WTC11 (cell line): ENCODE measurements at regions of chr6 and their contacts with region 1.

Region 1: DNA sequence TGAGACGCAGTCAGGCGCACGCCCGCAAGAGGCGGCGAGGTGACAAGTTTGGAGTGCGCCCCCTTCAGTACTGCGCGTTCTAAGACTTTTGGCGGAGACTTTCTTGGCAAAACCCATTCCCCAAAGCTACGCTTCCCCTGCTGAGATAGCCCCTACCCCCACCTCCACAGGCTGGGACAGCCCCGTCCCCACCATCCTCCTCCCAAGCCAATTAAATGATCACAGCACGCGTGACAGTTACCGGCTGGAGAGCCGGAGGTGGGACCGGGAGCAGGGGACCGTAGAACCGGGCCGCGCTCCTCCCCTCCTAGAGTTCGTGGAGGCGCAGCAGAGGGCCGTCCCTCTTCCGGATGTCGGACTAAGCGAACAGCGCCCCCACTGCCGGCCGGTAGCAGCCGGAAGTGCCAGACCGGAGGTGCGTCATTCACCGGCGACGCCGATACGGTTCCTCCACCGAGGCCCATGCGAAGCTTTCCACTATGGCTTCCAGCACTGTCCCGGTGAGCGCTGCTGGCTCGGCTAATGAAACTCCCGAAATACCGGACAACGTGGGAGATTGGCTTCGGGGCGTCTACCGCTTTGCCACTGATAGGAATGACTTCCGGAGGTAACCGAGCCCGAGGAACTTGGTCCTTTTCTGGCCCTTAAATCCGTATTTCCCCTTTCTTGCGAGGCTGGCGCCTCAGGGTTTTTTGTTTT is at the start of gene TOMM6:
- DNase-seq: peak; percentile 96
- ATAC-seq: peak; percentile 74
- H3K4me3 Mint-ChIP-seq: peak within 1 kb of the TSS; percentile 96
- H3K27ac Mint-ChIP-seq: peak within 1 kb of the TSS; percentile 97
- H3K4me1 Mint-ChIP-seq: peaks cover 22% of the 10 kb centered on the region
- H3K27me3 Mint-ChIP-seq: peaks cover 38% of the 10 kb centered on the region
- CTCF ChIP-seq: peak; percentile 96
- total RNA-seq, gene TOMM6: 219 to 233 TPM (median 228 TPM) in 3 replicates

Region 2: GRCh38 chr6:41239467-41240159 is 547.8 kb before region 1 on chr6:
- CTCF ChIA-PET with region 1: no interaction called
- POLR2A ChIA-PET with region 1: no interaction called
- DNase-seq: peak; percentile 61
- ATAC-seq: peak; percentile 93
- H3K4me3 Mint-ChIP-seq: peak overlapping the region; percentile 79
- H3K27ac Mint-ChIP-seq: no peak overlapping the region
- H3K4me1 Mint-ChIP-seq: peaks cover 14% of the 10 kb centered on the region
- H3K27me3 Mint-ChIP-seq: peaks cover 52% of the 10 kb centered on the region
- CTCF ChIP-seq: no peak

Region 3: GRCh38 chr6:41367700-41368099 is 419.7 kb before region 1 on chr6:
- CTCF ChIA-PET with region 1: interaction called, 17 read pairs
- POLR2A ChIA-PET with region 1: no interaction called
- DNase-seq: peak; percentile 84
- ATAC-seq: peak; percentile 77
- H3K4me3 Mint-ChIP-seq: no peak overlapping the region
- H3K27ac Mint-ChIP-seq: no peak overlapping the region
- H3K4me1 Mint-ChIP-seq: peaks cover 30% of the 10 kb centered on the region
- H3K27me3 Mint-ChIP-seq: peaks cover 75% of the 10 kb centered on the region
- CTCF ChIP-seq: peak; percentile 58

Region 4: DNA sequence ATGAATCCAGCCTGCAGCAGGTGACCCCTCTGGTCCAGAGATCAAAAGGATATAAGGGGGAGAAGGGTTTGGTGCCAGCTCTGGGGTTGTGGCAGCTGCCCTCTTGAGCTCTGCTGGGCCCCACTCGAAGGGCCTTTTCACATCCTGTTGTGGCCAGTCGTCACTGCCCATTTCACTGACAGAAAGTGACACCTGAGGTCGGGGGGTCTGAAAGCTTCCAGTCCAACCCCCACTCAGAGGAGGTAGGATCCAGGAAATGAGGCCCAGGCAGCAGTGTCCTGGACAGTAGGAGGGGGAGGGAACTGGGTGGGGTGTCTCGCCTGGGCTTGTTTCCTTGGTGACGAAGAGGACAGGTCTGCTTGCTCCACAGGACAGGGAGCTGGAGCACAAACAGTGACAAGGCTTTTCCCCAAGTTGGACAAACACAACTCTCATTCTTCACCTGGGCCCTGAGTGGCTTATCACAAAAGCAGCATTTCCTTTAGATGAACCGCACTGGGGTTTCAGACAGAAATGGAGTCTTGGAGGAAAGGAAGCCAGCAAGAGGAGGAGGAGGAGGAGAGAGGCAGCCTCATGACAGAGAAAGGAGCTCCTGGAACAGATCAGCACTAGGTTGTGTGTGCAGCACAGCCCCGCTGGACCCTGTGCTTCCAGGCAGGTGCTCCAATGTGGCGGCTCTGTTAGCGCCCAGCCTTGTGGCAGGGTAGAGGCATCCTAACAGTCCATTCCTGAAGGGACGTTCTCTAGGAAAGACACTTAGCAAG is 18.6 kb before region 1 on chr6:
- CTCF ChIA-PET with region 1: interaction called, 14 read pairs
- POLR2A ChIA-PET with region 1: no interaction called
- DNase-seq: no peak
- ATAC-seq: no peak
- H3K4me3 Mint-ChIP-seq: no peak overlapping the region
- H3K27ac Mint-ChIP-seq: peak overlapping the region; percentile 71; the same call in 1 of the 2 replicates
- H3K4me1 Mint-ChIP-seq: peaks cover 12% of the 10 kb centered on the region
- H3K27me3 Mint-ChIP-seq: no peaks in the 10 kb centered on the region
- CTCF ChIP-seq: no peak

Region 5: GRCh38 chr6:41895300-41896233 is 108.2 kb after region 1 on chr6 and contains the start of gene USP49:
- CTCF ChIA-PET with region 1: interaction called, 25 read pairs
- POLR2A ChIA-PET with region 1: interaction called, 3 read pairs
- DNase-seq: peak; percentile 95
- ATAC-seq: peak; percentile 84
- H3K4me3 Mint-ChIP-seq: no peak within 1 kb of the TSS
- H3K27ac Mint-ChIP-seq: peak within 1 kb of the TSS; percentile 99
- H3K4me1 Mint-ChIP-seq: peaks cover 21% of the 10 kb centered on the region
- H3K27me3 Mint-ChIP-seq: no peaks in the 10 kb centered on the region
- CTCF ChIP-seq: no peak
- total RNA-seq, gene USP49: 16.3 to 18.4 TPM (median 17.3 TPM) in 3 replicates

Region 6: DNA sequence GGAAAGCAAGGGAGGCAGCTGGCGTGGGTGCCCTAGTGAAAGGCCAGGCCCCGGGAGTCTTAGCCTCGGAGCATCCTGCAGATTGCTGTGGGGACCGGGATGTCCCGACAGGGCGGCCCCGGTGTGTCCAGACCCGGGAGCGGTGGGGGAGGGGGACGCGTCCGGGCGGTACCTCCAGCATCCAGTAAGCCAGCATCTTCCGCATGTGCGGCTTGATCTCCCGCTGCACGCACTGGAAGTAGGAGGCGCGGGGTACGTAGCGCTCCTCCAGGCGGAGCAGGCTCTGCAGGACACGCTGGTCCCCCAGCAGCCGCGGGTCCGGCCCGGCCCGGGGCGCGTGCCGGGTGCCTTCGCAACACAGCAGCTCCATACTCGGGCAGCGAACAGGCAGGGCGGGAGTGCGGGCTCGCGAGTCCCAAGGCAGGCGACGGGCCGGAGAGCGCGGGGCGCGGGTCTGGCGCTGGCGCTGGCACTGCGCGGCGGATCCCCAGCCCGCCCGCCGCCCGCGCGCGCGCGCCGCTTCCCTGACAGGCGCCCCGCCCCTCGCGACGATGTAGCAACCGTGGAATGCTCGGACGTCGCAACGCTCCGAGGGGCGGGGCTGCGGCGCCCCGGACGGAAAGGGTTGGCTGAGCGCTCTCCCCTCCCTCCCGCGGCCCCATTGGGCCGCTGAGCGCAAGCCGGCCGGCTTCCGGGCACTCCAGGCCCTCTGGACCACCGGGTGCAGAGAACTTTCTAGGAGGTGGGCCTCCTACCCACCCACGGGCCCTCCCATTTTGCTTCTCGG is 154.1 kb after region 1 on chr6 and contains the start of gene CCND3:
- CTCF ChIA-PET with region 1: interaction called, 27 read pairs
- POLR2A ChIA-PET with region 1: interaction called, 3 read pairs
- DNase-seq: peak; percentile 81
- ATAC-seq: peak; percentile 62
- H3K4me3 Mint-ChIP-seq: peak within 1 kb of the TSS; percentile 92
- H3K27ac Mint-ChIP-seq: peak within 1 kb of the TSS; percentile 46
- H3K4me1 Mint-ChIP-seq: peaks cover 32% of the 10 kb centered on the region
- H3K27me3 Mint-ChIP-seq: no peaks in the 10 kb centered on the region
- CTCF ChIP-seq: no peak
- total RNA-seq, gene CCND3: 23.0 to 33.6 TPM (median 23.0 TPM) in 3 replicates

Region 7: DNA sequence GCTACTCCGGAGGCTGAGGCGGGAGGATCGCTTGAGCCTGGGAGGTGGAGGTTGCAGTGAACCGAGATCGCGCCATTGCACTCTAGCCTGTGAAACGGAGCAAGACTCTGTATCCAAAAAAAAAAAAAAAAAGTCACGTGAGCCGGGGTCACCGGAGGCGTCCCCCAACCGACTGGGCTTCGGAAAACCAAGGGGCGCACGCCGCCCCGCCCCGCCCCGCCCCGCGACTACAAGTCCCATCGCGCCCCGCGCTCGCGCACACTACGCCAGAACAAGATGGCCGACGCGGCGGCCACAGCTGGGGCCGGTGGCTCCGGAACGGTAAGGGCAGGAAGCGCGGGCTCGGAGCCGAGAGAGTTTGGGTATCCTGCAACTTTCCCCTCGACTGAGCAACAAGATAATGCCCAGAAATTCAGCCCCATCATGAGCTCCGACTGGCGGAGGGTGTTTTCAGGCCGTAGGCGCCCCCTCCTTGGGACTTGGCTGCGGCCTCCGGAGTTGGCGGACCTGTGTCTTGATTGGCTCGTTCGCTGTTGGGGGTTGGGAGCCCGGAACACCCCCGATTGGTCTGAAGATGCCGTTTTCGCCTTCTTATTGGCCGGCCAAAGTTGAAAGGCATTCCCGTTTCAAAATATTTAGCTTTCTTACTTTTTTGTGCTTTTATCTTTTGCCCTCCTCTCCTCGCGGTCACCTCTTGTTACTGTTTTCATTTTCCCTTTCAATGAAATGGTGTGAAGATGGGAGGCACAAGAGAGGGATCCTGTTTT is 263.1 kb after region 1 on chr6 and contains the start of gene TAF8:
- CTCF ChIA-PET with region 1: interaction called, 71 read pairs
- POLR2A ChIA-PET with region 1: interaction called, 9 read pairs
- DNase-seq: peak; percentile 88
- ATAC-seq: peak; percentile 81
- H3K4me3 Mint-ChIP-seq: peak within 1 kb of the TSS; percentile 95
- H3K27ac Mint-ChIP-seq: peak within 1 kb of the TSS; percentile 95
- H3K4me1 Mint-ChIP-seq: peaks cover 25% of the 10 kb centered on the region
- H3K27me3 Mint-ChIP-seq: peaks cover 47% of the 10 kb centered on the region
- CTCF ChIP-seq: no peak
- total RNA-seq, gene TAF8: 29.6 to 33.6 TPM (median 31.0 TPM) in 3 replicates